Stomach (tissue), 19 donors: ENCODE measurements at regions of chr11 and their contacts with region 1.

Region 1: GRCh38 chr11:94519478-94520084 is 7.3 kb downstream of the C11orf97 start:
- DNase-seq: peak in 1 of 2 donors; percentile 68
- H3K4me3 ChIP-seq: no peak overlapping the region
- H3K27ac ChIP-seq: no peak overlapping the region
- H3K4me1 ChIP-seq: peaks cover 0 to 7% (median 0%) of the 10 kb centered on the region in 4 donors
- H3K27me3 ChIP-seq: no peaks in the 10 kb centered on the region
- CTCF ChIP-seq: peak in 4 of 7 experiments; percentile 50 to 76 (median 61)
- EP300 ChIP-seq: no peak
- POLR2A ChIP-seq: no peak

Region 2: DNA sequence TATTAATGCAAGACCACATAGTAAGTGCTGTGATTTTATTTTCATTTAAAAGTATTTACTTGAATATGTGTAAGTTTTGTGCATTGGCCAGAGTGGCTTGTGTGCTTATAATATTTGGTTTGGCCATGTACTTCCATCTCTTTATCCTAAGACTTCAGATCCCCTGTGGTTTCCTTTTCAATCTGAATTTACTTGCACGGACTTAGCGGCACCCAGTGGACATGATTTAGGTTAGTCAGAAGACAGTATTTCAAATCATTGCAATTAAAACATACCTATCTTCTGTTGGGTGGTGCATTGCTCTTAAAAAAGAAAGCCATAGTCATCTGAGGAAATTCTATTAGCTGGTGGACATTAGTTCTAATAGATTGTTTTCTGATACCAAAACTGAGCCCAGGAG is 78.3 kb after region 1 on chr11:
- intact Hi-C with region 1: loop called (anchors 5 kb)
- DNase-seq: peak; percentile 45 to 50
- H3K4me3 ChIP-seq: no peak overlapping the region
- H3K27ac ChIP-seq: no peak overlapping the region
- H3K4me1 ChIP-seq: peaks cover 0 to 16% (median 3%) of the 10 kb centered on the region in 4 donors
- H3K27me3 ChIP-seq: no peaks in the 10 kb centered on the region
- CTCF ChIP-seq: peak in 4 of 7 experiments; percentile 11 to 57 (median 18)
- EP300 ChIP-seq: no peak
- POLR2A ChIP-seq: no peak

Region 3: GRCh38 chr11:94926698-94927237 is 407.2 kb after region 1 on chr11:
- intact Hi-C with region 1: no loop called
- DNase-seq: peak; percentile 33 to 90
- H3K4me3 ChIP-seq: no peak overlapping the region
- H3K27ac ChIP-seq: peak overlapping the region; percentile 37 to 83 (median 71)
- H3K4me1 ChIP-seq: peaks cover 19 to 43% (median 29%) of the 10 kb centered on the region in 4 donors
- H3K27me3 ChIP-seq: no peaks in the 10 kb centered on the region
- CTCF ChIP-seq: no peak
- EP300 ChIP-seq: no peak
- POLR2A ChIP-seq: no peak